ENCODE measurements at regions of chr7 and their contacts with region 1.

Region 1: GRCh38 chr7:31051598-31052486 is at the start of gene ADCYAP1R1:
- DNase-seq: peak in 39 of 42 donors; percentile 27 to 81 (median 60)

Region 2: DNA sequence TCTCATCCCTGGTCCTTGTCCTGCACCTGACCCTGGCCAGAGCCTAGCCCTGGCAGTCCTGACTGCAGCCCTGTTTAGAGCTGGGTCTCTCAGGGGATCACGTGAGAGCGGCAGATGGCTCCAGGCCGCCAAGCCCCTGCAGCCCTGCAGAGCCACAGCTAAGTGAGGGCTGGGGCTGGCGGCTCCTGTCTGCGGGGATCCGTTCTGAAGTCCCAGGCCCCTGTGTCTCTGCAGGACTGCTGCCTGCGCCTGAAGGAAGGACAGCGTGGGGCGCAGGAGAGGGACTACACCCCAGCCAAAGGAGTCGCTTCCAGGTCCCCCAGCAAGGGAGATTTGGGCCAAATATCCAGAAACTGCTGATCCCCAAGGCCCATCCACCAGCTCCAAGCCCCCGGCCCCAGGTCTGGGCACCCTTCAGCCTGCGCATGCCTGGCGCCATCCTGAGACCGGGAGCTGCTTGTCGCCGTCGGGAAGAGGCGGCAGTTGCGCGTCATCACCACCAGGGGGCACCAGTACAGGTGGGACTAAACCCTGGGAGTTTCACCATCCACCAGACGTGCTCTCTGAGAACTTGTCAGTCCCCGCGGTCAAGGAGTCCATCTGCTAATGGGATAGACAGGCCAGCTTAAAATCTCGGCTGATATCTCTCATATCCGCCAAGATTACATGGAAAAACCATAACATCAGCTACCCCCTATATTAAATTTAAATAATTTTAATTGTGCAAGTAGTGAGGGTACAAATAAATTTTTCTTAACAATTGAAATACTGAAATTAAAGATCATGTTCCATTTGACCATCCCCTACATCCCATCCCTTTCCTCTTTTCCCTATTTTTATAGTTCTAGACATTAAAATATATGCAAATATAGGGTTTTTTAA is 113.2 kb before region 1 on chr7:
- intact Hi-C with region 1: no loop called
- DNase-seq: peak; percentile 30 to 91 (median 80)

Region 3: GRCh38 chr7:30983042-30983913 is 68.6 kb before region 1 on chr7:
- intact Hi-C with region 1: loop called (anchors 10 kb)
- DNase-seq: peak; percentile 54 to 94 (median 88)

Measured in head of caudate nucleus (tissue), 42 donors.